ENCODE measurements at regions of chr9 and their contacts with region 1.

Region 1: GRCh38 chr9:128927731-128928411 is 7.1 kb downstream of the PHYHD1 start:
- DNase-seq: peak in 28 of 35 experiments; percentile 11 to 74 (median 41)
- ATAC-seq: peak; percentile 78 to 86 (median 84)
- H3K4me3 ChIP-seq: no peak overlapping the region
- H3K4me3 Mint-ChIP-seq: no peak overlapping the region
- H3K27ac ChIP-seq: no peak overlapping the region
- H3K27ac Mint-ChIP-seq: peak overlapping the region in 1 of 2 donors; percentile 26
- H3K4me1 ChIP-seq: peaks cover 7 to 15% of the 10 kb centered on the region in 2 experiments
- H3K4me1 Mint-ChIP-seq: peaks cover 12 to 18% (median 17%) of the 10 kb centered on the region in 3 donors
- H3K27me3 ChIP-seq: peaks cover 0 to 3% of the 10 kb centered on the region in 2 experiments
- H3K27me3 Mint-ChIP-seq: no peaks in the 10 kb centered on the region

Region 2: DNA sequence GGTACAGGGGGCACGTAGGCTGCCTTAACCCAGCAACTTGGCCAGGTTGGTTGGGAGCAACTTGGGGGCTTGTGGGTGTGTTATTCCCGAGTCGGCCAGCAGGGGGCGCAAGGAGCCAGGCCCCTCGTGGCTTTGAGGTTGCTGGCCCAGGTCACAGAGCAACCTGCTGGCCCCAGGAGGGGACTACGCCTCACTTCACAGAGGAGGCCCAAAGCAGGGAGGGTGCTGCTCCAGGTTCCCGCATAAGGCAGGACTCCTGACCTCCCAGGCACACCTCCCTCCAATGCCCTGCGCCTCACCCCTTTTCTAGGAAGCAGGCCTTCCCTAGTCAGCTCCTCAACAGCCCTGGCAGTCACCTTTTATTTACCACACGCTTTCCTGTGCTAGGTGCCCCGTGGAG is 64.2 kb before region 1 on chr9:
- CTCF ChIA-PET with region 1: interaction called, 9 to 18 read pairs
- POLR2A ChIA-PET with region 1: interaction called in 1 of 2 experiments, 4 read pairs
- DNase-seq: peak; percentile 54 to 90 (median 80)
- ATAC-seq: peak; percentile 94 to 98 (median 96)
- H3K4me3 ChIP-seq: no peak overlapping the region
- H3K4me3 Mint-ChIP-seq: no peak overlapping the region
- H3K27ac ChIP-seq: no peak overlapping the region
- H3K27ac Mint-ChIP-seq: peak overlapping the region; percentile 31 to 52
- H3K4me1 ChIP-seq: peaks cover 2 to 6% of the 10 kb centered on the region in 2 experiments
- H3K4me1 Mint-ChIP-seq: peaks cover 4 to 10% (median 6%) of the 10 kb centered on the region in 3 donors
- H3K27me3 ChIP-seq: no peaks in the 10 kb centered on the region
- H3K27me3 Mint-ChIP-seq: no peaks in the 10 kb centered on the region

Region 3: DNA sequence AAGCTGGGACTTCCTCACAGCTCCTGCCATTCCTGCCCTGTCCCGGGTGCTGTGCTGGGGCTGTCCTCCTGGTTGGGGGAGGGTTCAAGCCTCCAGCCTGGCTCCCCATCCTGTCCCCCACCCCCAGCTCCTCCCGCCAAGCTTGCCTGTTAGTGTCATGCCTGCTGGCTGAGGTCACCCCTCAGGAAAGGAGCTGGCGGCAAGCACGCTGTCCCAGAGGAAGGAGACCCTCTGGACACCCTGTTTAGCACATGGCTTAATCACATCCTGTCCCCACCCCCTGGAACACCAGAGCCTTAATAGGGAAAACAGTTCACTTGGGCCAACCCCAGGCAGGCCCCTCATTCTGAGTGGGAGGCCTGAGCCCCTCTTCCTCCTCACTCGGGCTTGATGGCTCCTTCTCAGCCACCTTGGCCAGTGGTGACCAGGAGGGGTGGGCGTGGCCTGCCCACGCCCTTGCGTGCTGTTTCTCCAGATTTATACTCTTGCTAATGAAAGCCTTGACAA is 16.3 kb before region 1 on chr9:
- CTCF ChIA-PET with region 1: no interaction called
- POLR2A ChIA-PET with region 1: no interaction called
- DNase-seq: no peak
- ATAC-seq: peak in 1 of 4 experiments; percentile 14
- H3K4me3 ChIP-seq: no peak overlapping the region
- H3K4me3 Mint-ChIP-seq: peak overlapping the region in 1 of 3 donors; percentile 51
- H3K27ac ChIP-seq: peak overlapping the region; percentile 4
- H3K27ac Mint-ChIP-seq: peak overlapping the region; percentile 73 to 74
- H3K4me1 ChIP-seq: peaks cover 10 to 64% of the 10 kb centered on the region in 2 experiments
- H3K4me1 Mint-ChIP-seq: peaks cover 40 to 54% (median 53%) of the 10 kb centered on the region in 3 donors
- H3K27me3 ChIP-seq: peaks cover 0 to 2% of the 10 kb centered on the region in 2 experiments
- H3K27me3 Mint-ChIP-seq: no peaks in the 10 kb centered on the region

Measured in T-cell (primary cell).